ENCODE measurements at regions of chr18 and their contacts with region 1.

Region 1: DNA sequence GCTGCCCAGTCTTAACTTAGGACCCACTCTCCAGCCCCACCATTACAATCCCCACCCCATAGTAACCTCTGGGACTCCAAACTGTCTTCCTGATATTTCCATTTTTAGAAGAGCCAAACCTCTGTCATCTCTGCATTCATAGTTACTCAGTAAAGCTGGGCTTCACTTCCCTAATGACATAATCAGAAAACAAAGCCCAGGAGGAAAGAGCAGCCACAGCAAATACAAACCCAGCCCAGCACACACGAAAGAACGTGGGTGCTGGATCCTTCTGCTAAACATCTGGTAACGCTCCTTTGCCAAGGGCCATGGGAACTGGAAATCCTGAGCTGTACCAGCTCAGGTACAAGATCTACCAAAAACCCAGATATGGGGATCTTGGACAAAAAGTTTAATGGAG is 36.8 kb upstream of the RIOK3 start:
- DNase-seq: no peak
- H3K4me3 ChIP-seq: no peak overlapping the region
- H3K27ac ChIP-seq: no peak overlapping the region
- H3K4me1 ChIP-seq: no peaks in the 10 kb centered on the region
- H3K27me3 ChIP-seq: no peaks in the 10 kb centered on the region
- CTCF ChIP-seq: no peak
- EP300 ChIP-seq: no peak
- POLR2A ChIP-seq: no peak

Region 2: GRCh38 chr18:22790545-22791309 is 625.6 kb before region 1 on chr18:
- intact Hi-C with region 1: loop called (anchors 10 kb)
- DNase-seq: no peak
- H3K4me3 ChIP-seq: no peak overlapping the region
- H3K27ac ChIP-seq: no peak overlapping the region
- H3K4me1 ChIP-seq: no peaks in the 10 kb centered on the region
- H3K27me3 ChIP-seq: no peaks in the 10 kb centered on the region
- CTCF ChIP-seq: no peak
- EP300 ChIP-seq: no peak
- POLR2A ChIP-seq: no peak

Region 3: GRCh38 chr18:23032030-23032582 is 384.2 kb before region 1 on chr18:
- intact Hi-C with region 1: loop called (anchors 5 kb)
- DNase-seq: no peak
- H3K4me3 ChIP-seq: no peak overlapping the region
- H3K27ac ChIP-seq: no peak overlapping the region
- H3K4me1 ChIP-seq: no peaks in the 10 kb centered on the region
- H3K27me3 ChIP-seq: no peaks in the 10 kb centered on the region
- CTCF ChIP-seq: no peak
- EP300 ChIP-seq: no peak
- POLR2A ChIP-seq: no peak

Region 4: GRCh38 chr18:23350188-23350587 is 66.1 kb before region 1 on chr18:
- intact Hi-C with region 1: no loop called
- DNase-seq: no peak
- H3K4me3 ChIP-seq: no peak overlapping the region
- H3K27ac ChIP-seq: no peak overlapping the region
- H3K4me1 ChIP-seq: no peaks in the 10 kb centered on the region
- H3K27me3 ChIP-seq: no peaks in the 10 kb centered on the region
- CTCF ChIP-seq: no peak
- EP300 ChIP-seq: no peak
- POLR2A ChIP-seq: no peak

Region 5: DNA sequence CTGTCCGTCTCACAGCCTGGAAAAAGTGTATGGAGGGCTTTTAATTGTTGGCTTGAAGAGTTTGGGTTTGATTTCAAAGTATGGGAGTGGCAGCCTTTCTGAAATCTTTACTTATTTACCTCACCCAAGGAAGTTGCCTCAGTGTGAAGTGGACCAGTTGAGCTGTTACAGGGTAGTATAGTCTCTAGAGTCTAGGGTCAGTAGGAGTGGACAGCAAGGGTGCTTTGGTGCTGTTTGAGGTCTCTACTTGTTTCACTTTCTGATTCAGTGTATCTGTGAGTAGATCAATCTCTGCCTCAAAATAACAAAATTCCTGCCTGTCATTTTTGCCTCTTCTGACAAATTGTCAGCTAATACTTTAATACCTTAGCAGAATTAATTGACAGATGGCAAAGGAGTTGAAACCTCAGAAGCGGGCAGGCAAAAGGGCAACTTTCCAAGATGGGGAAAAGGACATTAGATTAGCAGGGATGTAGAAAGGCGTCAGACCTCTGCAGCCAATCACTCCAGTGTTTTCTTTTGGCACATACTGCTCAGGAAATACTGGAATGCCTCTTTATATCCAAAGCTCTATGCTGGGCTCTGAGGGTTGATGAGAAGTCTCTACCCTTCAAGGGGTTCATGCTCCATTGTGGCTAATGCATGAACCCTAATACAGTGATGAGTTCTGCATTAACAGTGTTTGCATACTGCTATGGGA is 42.7 kb after region 1 on chr18:
- intact Hi-C with region 1: no loop called
- DNase-seq: no peak
- H3K4me3 ChIP-seq: no peak overlapping the region
- H3K27ac ChIP-seq: no peak overlapping the region
- H3K4me1 ChIP-seq: peaks cover 0 to 68% (median 59%) of the 10 kb centered on the region in 4 donors
- H3K27me3 ChIP-seq: no peaks in the 10 kb centered on the region
- CTCF ChIP-seq: no peak
- EP300 ChIP-seq: no peak
- POLR2A ChIP-seq: no peak